ENCODE measurements at regions of chr4 and their contacts with region 1.

Region 1: GRCh38 chr4:98928505-98929340 is at the start of gene EIF4E:
- DNase-seq: peak; percentile 96
- ATAC-seq: peak; percentile 62
- H3K4me3 ChIP-seq: peak within 1 kb of the TSS; percentile 92
- H3K27ac ChIP-seq: peak within 1 kb of the TSS; percentile 98
- H3K4me1 ChIP-seq: peaks cover 17% of the 10 kb centered on the region
- H3K27me3 ChIP-seq: no peaks in the 10 kb centered on the region
- CTCF ChIP-seq: no peak
- total RNA-seq, gene EIF4E: 110 and 134 TPM in 2 replicates

Region 2: GRCh38 chr4:98672583-98673287 is 256.0 kb before region 1 on chr4:
- CTCF ChIA-PET with region 1: no interaction called
- POLR2A ChIA-PET with region 1: interaction called, 18 read pairs
- intact Hi-C with region 1: no loop called
- DNase-seq: no peak
- ATAC-seq: no peak
- H3K4me3 ChIP-seq: no peak overlapping the region
- H3K27ac ChIP-seq: no peak overlapping the region
- H3K4me1 ChIP-seq: no peaks in the 10 kb centered on the region
- H3K27me3 ChIP-seq: no peaks in the 10 kb centered on the region
- CTCF ChIP-seq: no peak

Region 3: DNA sequence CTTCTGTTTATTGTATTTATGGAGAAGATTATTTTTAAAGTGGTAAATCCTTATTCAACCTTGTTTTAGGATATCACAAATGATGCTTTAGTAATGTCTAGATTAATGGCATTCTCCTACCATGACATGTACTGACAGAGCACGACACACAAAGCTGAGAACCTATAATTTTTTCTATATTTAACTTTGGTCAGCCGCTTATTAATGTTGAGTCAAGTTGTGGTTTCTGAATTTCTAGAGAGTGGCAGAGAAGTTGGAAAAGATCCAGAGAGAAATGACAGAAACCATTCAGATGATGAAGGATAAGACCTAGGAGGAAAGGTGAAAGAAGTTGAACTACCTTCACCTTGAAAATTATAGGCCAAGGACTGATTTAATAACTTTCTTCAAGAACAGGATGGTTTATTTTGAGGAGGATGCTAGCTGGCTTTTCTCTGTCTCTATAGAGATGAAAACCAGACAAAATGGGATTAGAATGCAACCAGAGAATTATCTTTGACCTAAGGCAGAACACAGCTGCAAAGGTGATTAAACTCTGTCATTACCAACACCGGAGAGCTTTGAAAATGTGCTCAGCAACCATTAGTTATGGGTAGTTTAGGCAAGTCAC is 207.7 kb before region 1 on chr4:
- CTCF ChIA-PET with region 1: no interaction called
- POLR2A ChIA-PET with region 1: no interaction called
- intact Hi-C with region 1: loop called (anchors 2 kb)
- DNase-seq: peak; percentile 91
- ATAC-seq: peak; percentile 75
- H3K4me3 ChIP-seq: peak overlapping the region; percentile 51; the same call in 1 of the 2 replicates
- H3K27ac ChIP-seq: peak overlapping the region; percentile 90
- H3K4me1 ChIP-seq: peaks cover 25% of the 10 kb centered on the region
- H3K27me3 ChIP-seq: no peaks in the 10 kb centered on the region
- CTCF ChIP-seq: no peak

Region 4: GRCh38 chr4:98905839-98906238 is 22.9 kb before region 1 on chr4:
- CTCF ChIA-PET with region 1: no interaction called
- POLR2A ChIA-PET with region 1: interaction called, 17 read pairs
- intact Hi-C with region 1: no loop called
- DNase-seq: no peak
- ATAC-seq: no peak
- H3K4me3 ChIP-seq: no peak overlapping the region
- H3K27ac ChIP-seq: no peak overlapping the region
- H3K4me1 ChIP-seq: no peaks in the 10 kb centered on the region
- H3K27me3 ChIP-seq: no peaks in the 10 kb centered on the region
- CTCF ChIP-seq: no peak